AG04449 (cell line): ENCODE measurements at regions of chr5 and their contacts with region 1.

Region 1: DNA sequence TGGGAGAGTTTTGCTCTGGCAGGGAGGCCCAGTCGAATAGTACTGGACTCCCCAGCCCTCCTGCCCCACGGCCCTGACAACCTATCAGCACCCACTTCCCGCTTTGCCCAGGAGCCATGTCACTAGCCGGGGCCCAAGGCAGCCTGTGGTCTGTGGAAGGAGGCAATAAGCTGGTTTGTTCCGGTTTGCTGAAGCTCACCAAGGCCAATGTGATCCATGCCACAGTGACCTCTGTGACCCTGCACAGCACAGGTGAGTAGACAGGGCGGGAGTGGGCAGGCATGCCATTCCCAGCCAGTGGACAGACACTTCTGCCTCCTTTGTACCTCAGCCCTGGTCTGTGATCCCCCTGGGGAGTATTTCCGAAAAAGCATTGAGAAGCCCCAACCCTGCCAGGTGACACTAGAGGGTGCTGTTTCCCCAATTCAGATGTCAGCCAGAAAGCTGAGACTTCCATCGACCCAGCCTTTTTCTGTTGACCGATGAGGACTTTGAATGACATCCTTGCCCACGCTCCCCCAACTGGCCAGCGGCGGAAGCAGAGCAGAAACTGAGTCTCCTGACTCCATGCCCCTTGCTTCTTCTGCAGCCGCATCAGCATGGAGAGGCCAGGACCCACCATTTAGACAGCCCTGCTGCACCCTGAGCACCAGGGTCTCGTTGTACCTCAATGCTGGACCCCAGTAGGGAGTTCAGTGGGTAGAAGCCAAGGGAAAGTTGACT is 9.6 kb downstream of the PCYOX1L start:
- DNase-seq: no peak
- H3K4me3 ChIP-seq: no peak overlapping the region
- CTCF ChIP-seq: peak; percentile 78

Region 2: DNA sequence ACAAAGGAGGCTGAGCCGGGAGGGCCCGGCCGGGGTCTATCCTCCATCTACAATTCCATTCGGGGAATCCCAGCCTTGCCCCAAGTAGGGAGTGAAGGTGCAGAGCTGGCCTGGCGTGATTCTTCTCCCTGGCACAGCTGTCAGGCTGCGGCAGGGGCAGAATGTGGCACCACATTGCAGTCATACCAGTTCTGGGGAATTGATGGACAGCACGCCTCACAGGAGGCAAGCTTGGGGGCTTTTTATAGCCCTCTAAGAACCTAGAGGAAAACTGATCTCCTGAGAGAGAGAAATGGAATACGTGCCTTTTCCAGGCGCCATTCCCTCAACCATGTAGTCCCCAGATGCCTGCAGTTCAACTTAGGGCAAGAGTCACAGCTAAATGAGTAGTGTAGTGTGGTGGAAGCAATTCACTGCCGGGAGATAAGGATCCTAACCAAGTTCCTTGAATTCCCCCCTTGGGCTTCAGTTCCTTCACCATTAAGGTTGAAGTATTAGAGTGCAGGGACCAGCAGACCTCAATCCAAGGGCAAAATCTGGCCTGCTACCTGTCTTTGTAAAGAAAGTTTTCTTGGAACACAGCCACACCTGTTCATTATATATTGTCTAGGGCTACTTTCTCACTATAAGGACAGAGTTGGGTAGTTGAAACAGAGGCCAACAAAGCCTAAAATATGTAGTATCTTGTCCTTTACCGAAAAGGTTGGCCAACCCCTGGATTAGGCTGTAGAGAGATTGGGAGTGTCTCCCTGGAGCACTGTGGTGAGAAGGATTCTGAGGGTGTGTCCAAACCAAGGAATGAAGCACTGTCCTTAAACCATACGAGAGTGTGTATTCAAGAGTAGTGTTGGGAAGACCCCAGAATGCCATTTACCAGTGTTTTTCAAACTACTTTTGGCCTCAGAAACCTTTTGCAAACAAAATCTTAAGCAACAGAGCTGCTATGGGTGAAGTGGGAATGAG is 85.1 kb before region 1 on chr5:
- CTCF ChIA-PET with region 1: no interaction called
- POLR2A ChIA-PET with region 1: no interaction called
- DNase-seq: no peak
- H3K4me3 ChIP-seq: no peak overlapping the region
- CTCF ChIP-seq: no peak

Region 3: GRCh38 chr5:149345147-149345875 is 22.1 kb before region 1 on chr5 and contains the start of gene GRPEL2:
- CTCF ChIA-PET with region 1: interaction called, 308 read pairs
- POLR2A ChIA-PET with region 1: interaction called, 3 read pairs
- DNase-seq: peak; percentile 82
- H3K4me3 ChIP-seq: peak within 1 kb of the TSS; percentile 97
- CTCF ChIP-seq: no peak

Region 4: GRCh38 chr5:149406203-149406978 is 39.0 kb after region 1 on chr5:
- CTCF ChIA-PET with region 1: interaction called, 26 read pairs
- POLR2A ChIA-PET with region 1: interaction called, 10 read pairs
- DNase-seq: peak; percentile 93
- H3K4me3 ChIP-seq: peak overlapping the region; percentile 100
- CTCF ChIP-seq: peak; percentile 18

Region 5: DNA sequence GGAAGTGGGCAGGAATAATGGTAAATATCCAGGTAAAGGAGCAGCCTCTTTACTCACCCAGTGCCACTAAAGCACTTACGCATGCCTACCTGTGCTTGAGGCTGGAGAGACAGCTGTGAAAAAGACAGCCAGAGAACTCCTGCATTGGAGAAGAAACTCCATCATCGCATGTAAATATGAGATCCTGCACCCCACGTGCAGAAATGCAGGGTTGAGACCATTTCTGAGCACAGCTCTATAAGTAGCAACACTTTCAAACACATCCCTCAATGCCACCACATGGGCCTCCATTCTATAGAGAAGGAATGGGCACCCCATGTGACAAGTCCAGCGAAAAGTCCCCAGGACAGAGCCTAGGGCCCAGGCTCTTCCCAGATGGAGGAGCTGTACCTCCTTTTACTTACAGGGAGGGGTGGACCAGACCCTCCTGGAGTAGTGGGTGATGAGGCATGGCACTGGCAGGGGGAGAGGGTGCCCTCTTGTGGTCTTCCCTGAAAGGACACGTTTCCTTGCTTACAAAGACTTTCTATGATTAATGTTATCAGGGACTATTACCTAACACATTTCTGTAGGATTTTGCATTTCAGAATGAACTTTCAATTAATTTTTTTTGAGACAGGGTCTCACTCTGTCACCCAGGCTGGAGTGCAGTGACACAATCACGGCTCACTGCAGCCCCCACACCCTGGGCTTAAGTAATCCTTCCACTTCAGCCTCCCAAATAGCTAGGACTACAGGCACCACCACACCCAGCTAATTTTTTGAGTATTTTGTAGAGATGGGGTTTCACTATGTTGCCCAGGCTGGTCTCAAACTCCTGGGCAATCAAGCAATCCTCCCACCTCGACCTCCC is 67.0 kb after region 1 on chr5:
- CTCF ChIA-PET with region 1: interaction called, 519 read pairs
- POLR2A ChIA-PET with region 1: interaction called, 29 read pairs
- DNase-seq: no peak
- H3K4me3 ChIP-seq: no peak overlapping the region
- CTCF ChIP-seq: peak; percentile 86

Region 6: DNA sequence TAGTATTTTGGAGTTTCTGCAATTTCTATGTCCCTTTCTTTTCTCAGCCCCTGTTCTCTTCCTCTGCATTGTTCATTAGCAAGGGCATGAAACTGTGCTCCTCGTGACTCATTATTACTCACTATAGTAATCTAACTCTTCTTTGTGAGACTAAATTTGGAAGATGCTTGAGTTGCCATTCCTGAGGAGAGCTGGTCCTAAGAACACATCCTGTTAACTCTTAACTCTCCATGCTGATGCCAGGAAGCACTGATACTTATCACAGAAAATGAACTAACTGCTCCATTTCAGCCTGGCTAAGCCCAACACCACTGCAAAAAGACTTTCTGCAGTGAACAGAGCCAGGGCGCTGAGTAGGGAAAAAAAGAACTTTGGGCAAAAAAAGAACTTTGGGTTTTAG is 194.4 kb after region 1 on chr5:
- CTCF ChIA-PET with region 1: interaction called, 39 read pairs
- POLR2A ChIA-PET with region 1: no interaction called
- DNase-seq: peak; percentile 82
- H3K4me3 ChIP-seq: no peak overlapping the region
- CTCF ChIP-seq: no peak

Region 7: GRCh38 chr5:149680810-149681221 is 313.4 kb after region 1 on chr5:
- CTCF ChIA-PET with region 1: no interaction called
- POLR2A ChIA-PET with region 1: no interaction called
- DNase-seq: no peak
- H3K4me3 ChIP-seq: no peak overlapping the region
- CTCF ChIP-seq: no peak